Head of caudate nucleus (tissue), 42 donors: ENCODE measurements at regions of chr9 and their contacts with region 1.

Region 1: DNA sequence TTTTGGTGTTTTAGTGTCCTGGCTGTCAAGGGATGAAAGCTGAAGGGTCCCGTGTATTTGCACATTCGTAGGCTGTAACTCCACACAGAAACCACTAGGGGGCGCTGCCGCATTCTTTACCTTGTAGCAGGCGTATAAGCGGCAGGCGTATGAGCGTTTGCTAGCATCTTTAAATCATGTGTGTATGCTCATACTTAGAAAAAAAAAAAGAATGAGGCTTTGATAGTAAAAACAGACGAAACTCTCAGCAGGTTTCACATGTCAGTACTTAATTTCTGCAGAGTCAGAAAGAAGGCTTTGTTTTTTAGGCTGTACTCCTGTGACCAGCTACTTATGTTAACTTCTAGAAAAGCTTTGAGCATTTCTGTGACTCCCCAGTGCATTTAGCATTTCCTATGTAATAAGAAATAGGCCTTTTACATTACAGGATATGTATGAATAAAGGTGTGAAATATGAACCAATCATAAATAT is 218.8 kb upstream of the ADAMTSL1 start:
- DNase-seq: peak; percentile 61 to 94 (median 86)

Region 2: GRCh38 chr9:18442629-18443491 is 187.7 kb after region 1 on chr9:
- intact Hi-C with region 1: loop called (anchors 10 kb)
- DNase-seq: peak; percentile 66 to 93 (median 83)